ENCODE measurements at regions of chr10 and their contacts with region 1.

Region 1: GRCh38 chr10:60809157-60809556 is 30.9 kb downstream of the CDK1 start:
- DNase-seq: no peak
- ATAC-seq: no peak
- H3K4me3 ChIP-seq: no peak overlapping the region
- H3K27ac ChIP-seq: no peak overlapping the region
- H3K4me1 ChIP-seq: peaks cover 0 to 31% (median 14%) of the 10 kb centered on the region in 12 donors
- H3K27me3 ChIP-seq: no peaks in the 10 kb centered on the region
- CTCF ChIP-seq: no peak
- POLR2A ChIP-seq: no peak

Region 2: GRCh38 chr10:61135276-61135721 is 326.1 kb after region 1 on chr10:
- intact Hi-C with region 1: loop called in 2 of 10 experiments (anchors 5 to 10 kb)
- DNase-seq: no peak
- ATAC-seq: no peak
- H3K4me3 ChIP-seq: no peak overlapping the region
- H3K27ac ChIP-seq: no peak overlapping the region
- H3K4me1 ChIP-seq: peaks cover 0 to 14% (median 0%) of the 10 kb centered on the region in 12 donors
- H3K27me3 ChIP-seq: no peaks in the 10 kb centered on the region
- CTCF ChIP-seq: no peak
- POLR2A ChIP-seq: no peak

Measured in heart left ventricle (tissue), 16 donors.